A549 (cell line): ENCODE measurements at regions of chr16 and their contacts with region 1.

Region 1: GRCh38 chr16:740764-741505 is at the start of gene CIAO3:
- DNase-seq: peak; percentile 83 to 93
- ATAC-seq: peak; percentile 75 to 87
- H3K4me3 ChIP-seq: peak within 1 kb of the TSS; percentile 96
- H3K27ac ChIP-seq: peak within 1 kb of the TSS; percentile 95 to 96
- H3K4me1 ChIP-seq: peaks cover 6% of the 10 kb centered on the region; the same call in 2 of the 3 replicates
- CTCF ChIP-seq: peak; percentile 93
- EP300 ChIP-seq: no peak
- POLR2A ChIP-seq: peak; percentile 72
- RAD21 ChIP-seq: peak in 1 of 2 experiments; percentile 42; a peak in 2 of 5 replicates
- polyA plus RNA-seq, gene CIAO3: 17.4 and 19.3 TPM in 2 replicates

Region 2: DNA sequence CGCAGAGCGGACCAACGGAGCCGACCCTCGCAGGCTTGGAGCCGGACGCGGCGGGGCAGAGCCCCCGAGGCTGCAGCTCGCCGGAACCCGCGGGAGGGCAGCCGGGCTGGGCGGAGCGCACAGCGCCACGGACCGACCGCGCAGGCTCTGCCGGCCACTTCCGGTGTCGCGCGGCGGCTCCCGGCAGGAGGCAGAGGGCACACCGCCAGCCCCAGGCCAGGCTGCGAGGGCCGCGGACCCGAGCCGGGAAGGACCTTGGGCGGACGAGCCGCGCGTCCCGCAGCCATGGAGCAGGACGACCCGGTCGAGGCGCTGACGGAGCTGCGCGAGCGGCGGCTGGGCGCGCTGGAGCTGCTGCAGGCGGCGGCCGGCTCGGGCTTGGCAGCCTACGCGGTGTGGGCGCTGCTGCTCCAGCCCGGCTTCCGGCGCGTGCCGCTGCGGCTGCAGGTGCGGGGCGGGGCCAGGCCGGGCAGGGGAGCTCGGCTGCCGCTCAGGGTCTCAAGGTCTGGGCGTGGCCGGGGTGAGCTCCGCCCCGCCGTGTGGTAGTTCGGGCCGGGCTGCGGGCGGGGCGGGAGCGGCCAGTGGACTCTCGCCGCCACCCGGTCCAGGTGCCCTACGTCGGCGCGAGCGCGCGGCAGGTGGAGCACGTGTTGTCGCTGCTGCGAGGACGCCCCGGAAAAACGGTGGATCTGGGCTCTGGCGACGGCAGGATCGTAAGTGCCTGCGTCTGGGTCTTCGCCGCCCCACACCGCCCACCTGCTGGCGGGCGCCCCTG is 19.8 kb before region 1 on chr16 and contains the start of gene ANTKMT:
- CTCF ChIA-PET with region 1: interaction called, 656 read pairs
- POLR2A ChIA-PET with region 1: interaction called, 6 read pairs
- DNase-seq: peak; percentile 84 to 88
- ATAC-seq: peak; percentile 53 to 70
- H3K4me3 ChIP-seq: peak within 1 kb of the TSS; percentile 93
- H3K27ac ChIP-seq: peak within 1 kb of the TSS; percentile 98 to 99
- H3K4me1 ChIP-seq: peaks cover 49% of the 10 kb centered on the region
- CTCF ChIP-seq: no peak
- EP300 ChIP-seq: peak in 1 of 2 experiments; percentile 25; a peak in 1 of 5 replicates
- POLR2A ChIP-seq: peak; percentile 85
- RAD21 ChIP-seq: no peak
- polyA plus RNA-seq, gene ANTKMT: 10.9 and 11.9 TPM in 2 replicates

Region 3: DNA sequence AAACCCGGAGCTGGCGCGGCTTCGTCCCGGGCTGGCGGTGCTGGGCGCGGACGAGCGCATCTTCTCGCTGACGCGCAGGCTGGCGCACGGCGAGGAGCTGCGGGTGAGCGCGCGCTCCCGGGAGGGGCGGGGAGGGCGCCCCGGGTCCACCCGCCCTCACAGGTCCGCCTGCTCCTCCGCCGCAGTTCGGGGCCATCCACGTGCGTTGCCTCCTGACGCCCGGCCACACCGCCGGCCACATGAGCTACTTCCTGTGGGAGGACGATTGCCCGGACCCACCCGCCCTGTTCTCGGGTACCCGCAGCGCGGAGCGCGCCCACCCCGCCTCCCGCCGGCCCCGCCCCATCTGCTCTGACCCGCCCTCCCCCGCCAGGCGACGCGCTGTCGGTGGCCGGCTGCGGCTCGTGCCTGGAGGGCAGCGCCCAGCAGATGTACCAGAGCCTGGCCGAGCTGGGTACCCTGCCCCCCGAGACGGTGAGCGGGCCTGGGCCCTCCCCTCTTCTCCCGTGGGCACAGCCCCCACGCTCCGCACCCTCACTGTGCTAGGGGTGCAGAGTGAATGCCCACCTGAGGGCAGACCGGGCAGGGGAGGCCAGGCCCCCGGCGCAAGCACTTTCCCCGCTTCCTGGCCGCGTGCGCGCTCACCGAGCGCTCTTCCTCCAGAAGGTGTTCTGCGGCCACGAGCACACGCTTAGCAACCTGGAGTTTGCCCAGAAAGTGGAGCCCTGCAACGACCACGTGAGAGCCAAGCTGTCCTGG is 12.6 kb before region 1 on chr16:
- CTCF ChIA-PET with region 1: interaction called, 656 read pairs
- POLR2A ChIA-PET with region 1: interaction called, 5 read pairs
- DNase-seq: peak; percentile 63 to 88
- ATAC-seq: peak; percentile 15 to 61
- H3K4me3 ChIP-seq: peak overlapping the region; percentile 60
- H3K27ac ChIP-seq: peak overlapping the region; percentile 89 to 91
- H3K4me1 ChIP-seq: peaks cover 13% of the 10 kb centered on the region
- CTCF ChIP-seq: no peak
- EP300 ChIP-seq: no peak
- POLR2A ChIP-seq: no peak; the same call in 1 of the 2 replicates
- RAD21 ChIP-seq: no peak

Region 4: GRCh38 chr16:754656-755055 is 13.7 kb after region 1 on chr16:
- CTCF ChIA-PET with region 1: interaction called, 15 read pairs
- POLR2A ChIA-PET with region 1: interaction called, 3 read pairs
- DNase-seq: no peak
- ATAC-seq: no peak
- H3K4me3 ChIP-seq: no peak overlapping the region
- H3K27ac ChIP-seq: no peak overlapping the region
- H3K4me1 ChIP-seq: no peaks in the 10 kb centered on the region
- CTCF ChIP-seq: no peak
- EP300 ChIP-seq: no peak
- POLR2A ChIP-seq: no peak
- RAD21 ChIP-seq: no peak

Region 5: GRCh38 chr16:760545-761343 is 19.8 kb after region 1 on chr16 and contains the start of gene MSLN:
- CTCF ChIA-PET with region 1: interaction called, 15 read pairs
- POLR2A ChIA-PET with region 1: no interaction called
- DNase-seq: peak in 1 of 2 experiments; percentile 71
- ATAC-seq: peak; percentile 22 to 62; a peak in 3 of 6 replicates
- H3K4me3 ChIP-seq: no peak within 1 kb of the TSS
- H3K27ac ChIP-seq: peak within 1 kb of the TSS; percentile 66 to 79; a peak in 5 of 6 replicates
- H3K4me1 ChIP-seq: peaks cover 35% of the 10 kb centered on the region
- CTCF ChIP-seq: no peak
- EP300 ChIP-seq: no peak
- POLR2A ChIP-seq: no peak
- RAD21 ChIP-seq: no peak
- polyA plus RNA-seq, gene MSLN: 1.8 and 2.4 TPM in 2 replicates